Caco-2 (cell line): ENCODE measurements at regions of chrX and their contacts with region 1.

Region 1: DNA sequence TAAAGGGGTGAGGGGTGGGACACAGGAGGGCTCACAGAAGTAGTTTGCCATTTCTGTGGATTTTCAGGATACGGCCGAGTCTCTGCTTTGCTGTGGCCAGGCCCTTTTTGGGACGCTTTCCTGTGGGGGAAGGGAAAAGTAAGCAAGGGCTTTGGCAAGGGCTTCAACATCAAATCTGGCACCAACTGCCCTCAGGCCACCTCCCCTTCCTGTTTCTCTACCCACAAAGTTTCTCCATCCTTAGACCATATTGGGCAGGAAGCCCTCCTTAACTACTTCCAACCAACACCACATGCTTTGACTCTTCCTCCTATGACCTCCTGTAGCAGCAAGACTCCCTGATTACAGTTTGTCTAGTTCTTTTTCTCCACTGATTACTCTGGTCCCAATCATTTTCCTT is 105.1 kb downstream of the PHF8 start:
- DNase-seq: no peak
- H3K4me3 ChIP-seq: no peak overlapping the region
- H3K4me3 Mint-ChIP-seq: no peak overlapping the region
- H3K27ac Mint-ChIP-seq: no peak overlapping the region
- H3K4me1 ChIP-seq: no peaks in the 10 kb centered on the region
- H3K4me1 Mint-ChIP-seq: no peaks in the 10 kb centered on the region
- H3K27me3 ChIP-seq: no peaks in the 10 kb centered on the region
- H3K27me3 Mint-ChIP-seq: no peaks in the 10 kb centered on the region
- CTCF ChIP-seq: no peak

Region 2: GRCh38 chrX:54007682-54008081 is 68.6 kb after region 1 on chrX:
- CTCF ChIA-PET with region 1: no interaction called
- POLR2A ChIA-PET with region 1: no interaction called
- intact Hi-C with region 1: no loop called
- DNase-seq: no peak
- H3K4me3 ChIP-seq: no peak overlapping the region
- H3K4me3 Mint-ChIP-seq: no peak overlapping the region
- H3K27ac Mint-ChIP-seq: no peak overlapping the region
- H3K4me1 ChIP-seq: no peaks in the 10 kb centered on the region
- H3K4me1 Mint-ChIP-seq: no peaks in the 10 kb centered on the region
- H3K27me3 ChIP-seq: no peaks in the 10 kb centered on the region
- H3K27me3 Mint-ChIP-seq: no peaks in the 10 kb centered on the region
- CTCF ChIP-seq: no peak

Region 3: DNA sequence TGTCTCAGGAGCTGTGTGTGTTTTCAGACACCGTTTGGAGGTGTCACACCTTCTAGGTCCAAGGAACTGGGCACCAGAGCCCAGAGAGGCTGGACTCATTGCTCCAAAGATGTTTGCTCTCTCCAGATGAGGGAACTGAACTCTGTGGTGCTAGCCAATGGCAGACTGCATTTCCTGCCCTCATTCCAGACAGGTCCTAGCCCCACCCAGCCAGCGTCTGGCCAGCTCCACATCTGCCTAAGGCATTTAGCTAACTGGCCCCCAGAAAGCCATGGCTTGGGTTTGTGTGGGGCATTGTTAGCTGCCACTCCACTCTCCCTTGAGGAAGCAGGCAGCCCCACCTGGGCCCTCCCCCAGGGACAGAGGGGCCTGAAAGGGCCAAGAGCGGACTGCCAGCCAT is 545.5 kb after region 1 on chrX:
- CTCF ChIA-PET with region 1: no interaction called
- POLR2A ChIA-PET with region 1: no interaction called
- intact Hi-C with region 1: loop called (anchors 5 kb)
- DNase-seq: no peak
- H3K4me3 ChIP-seq: no peak overlapping the region
- H3K4me3 Mint-ChIP-seq: no peak overlapping the region
- H3K27ac Mint-ChIP-seq: no peak overlapping the region
- H3K4me1 ChIP-seq: no peaks in the 10 kb centered on the region
- H3K4me1 Mint-ChIP-seq: no peaks in the 10 kb centered on the region
- H3K27me3 ChIP-seq: no peaks in the 10 kb centered on the region
- H3K27me3 Mint-ChIP-seq: no peaks in the 10 kb centered on the region
- CTCF ChIP-seq: no peak